ENCODE measurements at regions of chr5 and their contacts with region 1.

Region 1: GRCh38 chr5:55286411-55286933 is 21.0 kb downstream of the DHX29 start:
- DNase-seq: no peak
- H3K4me3 ChIP-seq: no peak overlapping the region
- H3K27ac ChIP-seq: no peak overlapping the region
- H3K4me1 ChIP-seq: no peaks in the 10 kb centered on the region
- H3K27me3 ChIP-seq: no peaks in the 10 kb centered on the region
- CTCF ChIP-seq: no peak
- POLR2A ChIP-seq: no peak

Region 2: DNA sequence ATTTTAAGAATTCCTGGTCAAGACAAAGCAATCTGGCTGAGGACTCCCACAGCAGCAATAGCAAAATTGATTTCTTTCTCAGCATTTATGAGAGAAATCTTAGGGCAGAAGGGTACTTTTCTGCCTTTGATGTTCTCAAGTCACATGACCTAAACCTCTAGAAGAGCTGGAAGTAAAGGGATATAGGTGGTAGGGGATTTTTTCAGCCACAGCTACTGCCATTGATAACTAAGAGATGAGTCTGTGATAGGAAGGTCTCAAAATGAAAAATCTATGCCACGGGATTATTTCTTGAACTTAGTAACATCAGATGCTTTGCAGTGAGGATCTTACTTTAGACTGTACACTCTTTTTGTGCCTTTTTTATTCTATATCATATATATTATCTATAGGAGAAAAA is 672.7 kb after region 1 on chr5:
- intact Hi-C with region 1: loop called in 1 of 2 experiments (anchors 10 kb)
- DNase-seq: no peak
- H3K4me3 ChIP-seq: no peak overlapping the region
- H3K27ac ChIP-seq: no peak overlapping the region
- H3K4me1 ChIP-seq: no peaks in the 10 kb centered on the region
- H3K27me3 ChIP-seq: no peaks in the 10 kb centered on the region
- CTCF ChIP-seq: no peak
- POLR2A ChIP-seq: no peak

Measured in adrenal gland (tissue), 19 donors.